ENCODE measurements at regions of chr16 and their contacts with region 1.

Region 1: GRCh38 chr16:234468-235305 is at the start of gene FAM234A:
- DNase-seq: peak; percentile 95 to 98 (median 96)
- H3K4me3 ChIP-seq: peak within 1 kb of the TSS; percentile 69 to 91
- H3K4me3 Mint-ChIP-seq: peak within 1 kb of the TSS; percentile 90 to 97 (median 96)
- H3K27ac ChIP-seq: peak within 1 kb of the TSS; percentile 98
- H3K27ac Mint-ChIP-seq: peak within 1 kb of the TSS; percentile 99 to 100 (median 99)
- H3K4me1 ChIP-seq: peaks cover 6% of the 10 kb centered on the region
- H3K4me1 Mint-ChIP-seq: peaks cover 8 to 25% (median 16%) of the 10 kb centered on the region in 4 donors
- H3K27me3 ChIP-seq: no peaks in the 10 kb centered on the region
- H3K27me3 Mint-ChIP-seq: no peaks in the 10 kb centered on the region
- total RNA-seq, gene FAM234A: 34.8 to 41.1 TPM

Region 2: DNA sequence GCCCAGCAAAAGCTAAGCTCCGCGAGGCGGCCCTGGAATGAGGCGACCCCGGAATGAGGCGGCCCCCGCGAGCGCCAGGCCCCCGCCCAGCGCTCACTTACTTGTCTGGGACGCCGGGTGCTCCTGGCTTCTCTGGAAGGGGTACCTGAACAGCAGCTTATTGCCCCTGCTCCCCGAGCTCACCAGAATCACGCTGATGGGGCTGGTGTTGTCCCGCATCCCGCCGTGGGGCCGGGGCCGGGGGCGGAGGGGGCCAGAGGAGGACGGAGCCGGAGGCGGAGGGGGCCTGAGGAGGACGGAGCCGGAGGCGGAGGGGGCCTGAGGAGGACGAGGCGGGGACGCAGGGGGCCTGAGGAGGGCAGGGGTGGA is 96.7 kb before region 1 on chr16:
- CTCF ChIA-PET with region 1: no interaction called
- POLR2A ChIA-PET with region 1: interaction called, 3 read pairs
- intact Hi-C with region 1: loop called (anchors 5 kb)
- DNase-seq: peak; percentile 15 to 46 (median 27)
- H3K4me3 ChIP-seq: peak overlapping the region in 1 of 2 donors; percentile 47
- H3K4me3 Mint-ChIP-seq: peak overlapping the region; percentile 77 to 87 (median 83)
- H3K27ac ChIP-seq: peak overlapping the region; percentile 47
- H3K27ac Mint-ChIP-seq: peak overlapping the region; percentile 31 to 82 (median 74)
- H3K4me1 ChIP-seq: peaks cover 14% of the 10 kb centered on the region
- H3K4me1 Mint-ChIP-seq: peaks cover 14 to 30% (median 21%) of the 10 kb centered on the region in 4 donors
- H3K27me3 ChIP-seq: no peaks in the 10 kb centered on the region
- H3K27me3 Mint-ChIP-seq: no peaks in the 10 kb centered on the region

Region 3: DNA sequence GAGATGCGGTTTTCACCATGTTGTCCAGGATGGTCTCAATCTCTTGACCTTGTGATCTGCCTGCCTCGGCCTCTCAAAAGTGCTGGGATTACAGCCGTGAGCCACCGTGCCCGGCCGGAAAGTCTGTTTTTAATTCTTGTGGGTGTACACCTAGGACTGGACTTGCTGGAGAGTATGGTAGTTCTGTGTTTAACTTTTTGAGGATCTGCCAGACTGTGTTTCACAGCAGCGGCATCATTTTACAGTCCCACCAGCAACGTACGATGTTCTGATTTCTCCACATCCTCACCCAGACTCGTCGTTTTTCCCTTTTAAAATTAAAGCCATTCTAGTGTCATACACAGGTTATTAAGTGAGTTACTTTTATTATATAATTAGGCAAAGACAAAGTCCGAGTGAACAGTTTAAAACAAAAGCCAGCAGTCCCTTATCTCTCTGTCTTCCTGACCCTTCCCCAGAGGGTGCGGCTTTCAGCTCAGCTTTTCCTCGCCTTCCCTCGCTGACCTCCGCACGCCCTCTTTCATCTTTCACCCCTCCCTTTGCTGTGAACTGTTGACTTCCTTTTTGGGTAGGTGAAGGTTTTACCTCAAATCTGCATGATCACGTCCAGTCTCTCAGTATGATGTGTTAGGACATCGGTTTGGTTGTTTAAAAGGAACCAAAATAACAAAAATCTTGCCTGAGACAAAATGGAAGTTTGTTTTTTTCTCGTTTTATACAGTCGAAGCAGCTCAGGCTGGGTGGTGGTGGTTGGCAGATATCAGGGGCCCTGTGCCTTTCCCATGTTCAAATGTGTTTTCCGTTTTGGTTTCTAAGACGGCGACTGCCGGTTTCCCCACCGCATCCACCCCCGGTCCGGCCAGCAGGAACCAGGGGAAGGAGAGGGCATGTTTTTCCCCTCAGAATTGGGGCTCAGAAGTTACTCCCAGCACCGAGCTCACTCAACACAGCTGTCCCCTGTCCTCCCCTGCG is 18.0 kb after region 1 on chr16:
- CTCF ChIA-PET with region 1: interaction called, 18 read pairs
- POLR2A ChIA-PET with region 1: interaction called, 21 read pairs
- intact Hi-C with region 1: loop called (anchors 2 kb)
- DNase-seq: peak; percentile 31 to 42 (median 34)
- H3K4me3 ChIP-seq: peak overlapping the region; percentile 44 to 61
- H3K4me3 Mint-ChIP-seq: peak overlapping the region; percentile 78 to 92 (median 83)
- H3K27ac ChIP-seq: peak overlapping the region; percentile 51
- H3K27ac Mint-ChIP-seq: peak overlapping the region; percentile 69 to 96 (median 94)
- H3K4me1 ChIP-seq: peaks cover 22% of the 10 kb centered on the region
- H3K4me1 Mint-ChIP-seq: peaks cover 19 to 43% (median 29%) of the 10 kb centered on the region in 4 donors
- H3K27me3 ChIP-seq: no peaks in the 10 kb centered on the region
- H3K27me3 Mint-ChIP-seq: no peaks in the 10 kb centered on the region

Region 4: GRCh38 chr16:324451-325334 is 90.0 kb after region 1 on chr16:
- CTCF ChIA-PET with region 1: interaction called, 5 read pairs
- POLR2A ChIA-PET with region 1: interaction called, 19 read pairs
- intact Hi-C with region 1: no loop called
- DNase-seq: peak; percentile 88 to 93 (median 90)
- H3K4me3 ChIP-seq: peak overlapping the region; percentile 22 to 60
- H3K4me3 Mint-ChIP-seq: peak overlapping the region; percentile 69 to 85 (median 80)
- H3K27ac ChIP-seq: peak overlapping the region; percentile 62
- H3K27ac Mint-ChIP-seq: peak overlapping the region; percentile 94 to 99 (median 97)
- H3K4me1 ChIP-seq: peaks cover 75% of the 10 kb centered on the region
- H3K4me1 Mint-ChIP-seq: peaks cover 40 to 77% (median 50%) of the 10 kb centered on the region in 4 donors
- H3K27me3 ChIP-seq: no peaks in the 10 kb centered on the region
- H3K27me3 Mint-ChIP-seq: no peaks in the 10 kb centered on the region

Region 5: DNA sequence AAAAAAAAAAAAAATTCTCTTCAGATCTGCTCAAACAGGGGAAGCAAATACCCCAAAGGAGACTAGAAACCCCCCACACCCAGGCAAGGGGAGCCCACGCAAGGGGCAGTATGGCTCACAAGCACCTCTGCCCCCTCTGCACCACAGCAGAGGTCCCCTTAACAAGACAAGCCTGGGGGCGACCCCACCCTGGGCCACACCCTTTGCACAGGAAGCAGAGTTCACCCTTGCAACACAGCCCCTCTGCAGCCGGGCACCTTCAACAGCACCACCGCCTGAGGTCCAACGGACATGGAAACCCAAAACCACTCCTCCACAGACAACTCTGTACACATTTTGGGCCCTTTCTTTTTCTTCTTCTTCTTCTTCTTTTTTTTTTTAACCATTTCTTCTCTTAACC is 105.0 kb after region 1 on chr16:
- CTCF ChIA-PET with region 1: no interaction called
- POLR2A ChIA-PET with region 1: no interaction called
- intact Hi-C with region 1: no loop called
- DNase-seq: peak in 1 of 5 donors; percentile 21
- H3K4me3 ChIP-seq: no peak overlapping the region
- H3K4me3 Mint-ChIP-seq: peak overlapping the region in 7 of 8 donors; percentile 19 to 89 (median 68)
- H3K27ac ChIP-seq: no peak overlapping the region
- H3K27ac Mint-ChIP-seq: peak overlapping the region in 6 of 7 donors; percentile 38 to 87 (median 72)
- H3K4me1 ChIP-seq: peaks cover 54% of the 10 kb centered on the region
- H3K4me1 Mint-ChIP-seq: peaks cover 38 to 78% (median 59%) of the 10 kb centered on the region in 4 donors
- H3K27me3 ChIP-seq: no peaks in the 10 kb centered on the region
- H3K27me3 Mint-ChIP-seq: no peaks in the 10 kb centered on the region